ENCODE measurements at regions of chr7 and their contacts with region 1.

Region 1: DNA sequence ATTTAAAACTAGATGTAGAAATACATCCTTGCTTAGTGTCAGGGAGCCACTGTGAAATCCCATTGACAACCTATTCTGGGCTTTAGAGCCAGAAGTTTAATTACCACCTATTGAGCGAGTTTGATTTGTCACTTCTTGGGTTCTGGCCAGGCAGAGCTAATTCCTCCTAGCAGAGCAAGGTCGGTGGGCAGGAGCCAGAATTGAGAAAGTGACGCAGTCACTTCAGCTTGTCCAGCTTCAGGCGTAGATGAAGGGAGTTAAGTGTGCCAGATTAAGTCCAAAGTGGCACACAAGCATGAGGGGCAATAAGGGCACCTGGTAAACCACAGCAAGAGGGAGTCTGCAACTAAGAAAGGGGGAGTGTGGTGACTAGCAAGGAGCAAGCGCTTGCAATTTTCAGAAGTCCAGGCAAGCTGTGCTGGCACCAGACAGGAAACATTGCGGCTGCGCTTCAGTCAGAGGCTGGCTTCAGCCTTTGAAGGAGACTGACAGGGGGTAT is 119.4 kb downstream of the ST7 start:
- DNase-seq: peak; percentile 62 to 89 (median 70)
- ATAC-seq: peak; percentile 51 to 91 (median 79)
- H3K4me3 ChIP-seq: peak overlapping the region in 3 of 12 donors; percentile 17 to 34 (median 22)
- H3K27ac ChIP-seq: peak overlapping the region in 11 of 12 donors; percentile 17 to 82 (median 62)
- H3K4me1 ChIP-seq: peaks cover 0 to 56% (median 36%) of the 10 kb centered on the region in 12 donors
- H3K27me3 ChIP-seq: no peaks in the 10 kb centered on the region
- CTCF ChIP-seq: no peak
- POLR2A ChIP-seq: no peak

Region 2: GRCh38 chr7:117014673-117015133 is 58.0 kb before region 1 on chr7:
- intact Hi-C with region 1: loop called in 1 of 10 experiments (anchors 10 kb)
- DNase-seq: peak in 4 of 5 donors; percentile 64 to 74 (median 70)
- ATAC-seq: peak; percentile 83 to 94 (median 92)
- H3K4me3 ChIP-seq: peak overlapping the region in 8 of 12 donors; percentile 10 to 41 (median 20)
- H3K27ac ChIP-seq: peak overlapping the region in 11 of 12 donors; percentile 0 to 61 (median 23)
- H3K4me1 ChIP-seq: peaks cover 0 to 47% (median 23%) of the 10 kb centered on the region in 12 donors
- H3K27me3 ChIP-seq: no peaks in the 10 kb centered on the region
- CTCF ChIP-seq: no peak
- POLR2A ChIP-seq: no peak

Region 3: DNA sequence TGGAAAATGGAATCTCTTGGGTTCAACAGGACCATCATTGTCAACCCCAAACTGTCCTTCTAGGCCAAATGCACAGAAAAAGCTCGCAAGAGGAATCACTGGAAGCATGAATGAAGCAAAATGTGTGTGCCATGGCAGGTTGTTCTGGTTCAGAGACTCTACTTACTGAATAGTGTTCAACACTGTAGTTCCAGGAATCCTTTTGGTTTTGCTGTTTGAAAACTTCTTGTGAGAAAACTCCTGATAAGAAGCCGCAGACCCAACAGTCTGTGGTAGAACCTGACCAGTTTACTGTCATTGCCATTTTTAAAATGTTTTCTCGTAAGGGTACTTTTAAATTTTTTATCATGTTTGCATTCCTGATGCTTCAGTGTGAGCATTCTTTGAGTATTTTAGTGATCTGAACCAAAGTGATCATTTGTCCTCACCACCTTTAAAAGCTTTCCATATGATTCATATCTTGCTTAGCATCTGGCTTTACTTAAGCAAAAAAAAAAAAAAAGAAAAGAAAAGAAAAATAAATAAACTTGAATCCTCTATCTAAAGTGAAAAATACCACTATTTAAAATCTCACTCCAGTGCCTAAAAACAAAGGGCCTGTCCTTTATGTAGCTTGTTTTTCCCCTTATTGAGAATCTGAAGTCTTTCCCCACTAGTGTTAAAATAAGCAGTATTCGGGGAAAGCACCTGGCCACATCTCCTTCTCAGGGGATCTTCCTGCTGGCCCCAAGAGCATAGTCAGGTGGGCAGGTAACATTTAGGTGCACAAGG is 157.8 kb after region 1 on chr7:
- intact Hi-C with region 1: no loop called
- DNase-seq: no peak
- ATAC-seq: no peak
- H3K4me3 ChIP-seq: no peak overlapping the region
- H3K27ac ChIP-seq: no peak overlapping the region
- H3K4me1 ChIP-seq: peaks cover 0 to 2% (median 0%) of the 10 kb centered on the region in 12 donors
- H3K27me3 ChIP-seq: no peaks in the 10 kb centered on the region
- CTCF ChIP-seq: no peak
- POLR2A ChIP-seq: no peak